ENCODE measurements at regions of chr12 and their contacts with region 1.

Region 1: GRCh38 chr12:62006076-62006732 is 254.0 kb upstream of the USP15 start:
- DNase-seq: peak in 6 of 9 donors; percentile 2 to 28 (median 10)
- ATAC-seq: peak; percentile 47
- H3K4me3 ChIP-seq: no peak overlapping the region
- H3K4me3 Mint-ChIP-seq: no peak overlapping the region
- H3K27ac ChIP-seq: no peak overlapping the region
- H3K27ac Mint-ChIP-seq: no peak overlapping the region
- H3K4me1 ChIP-seq: no peaks in the 10 kb centered on the region
- H3K4me1 Mint-ChIP-seq: no peaks in the 10 kb centered on the region
- H3K27me3 ChIP-seq: no peaks in the 10 kb centered on the region
- H3K27me3 Mint-ChIP-seq: peaks cover 0 to 5% (median 3%) of the 10 kb centered on the region in 5 donors

Region 2: DNA sequence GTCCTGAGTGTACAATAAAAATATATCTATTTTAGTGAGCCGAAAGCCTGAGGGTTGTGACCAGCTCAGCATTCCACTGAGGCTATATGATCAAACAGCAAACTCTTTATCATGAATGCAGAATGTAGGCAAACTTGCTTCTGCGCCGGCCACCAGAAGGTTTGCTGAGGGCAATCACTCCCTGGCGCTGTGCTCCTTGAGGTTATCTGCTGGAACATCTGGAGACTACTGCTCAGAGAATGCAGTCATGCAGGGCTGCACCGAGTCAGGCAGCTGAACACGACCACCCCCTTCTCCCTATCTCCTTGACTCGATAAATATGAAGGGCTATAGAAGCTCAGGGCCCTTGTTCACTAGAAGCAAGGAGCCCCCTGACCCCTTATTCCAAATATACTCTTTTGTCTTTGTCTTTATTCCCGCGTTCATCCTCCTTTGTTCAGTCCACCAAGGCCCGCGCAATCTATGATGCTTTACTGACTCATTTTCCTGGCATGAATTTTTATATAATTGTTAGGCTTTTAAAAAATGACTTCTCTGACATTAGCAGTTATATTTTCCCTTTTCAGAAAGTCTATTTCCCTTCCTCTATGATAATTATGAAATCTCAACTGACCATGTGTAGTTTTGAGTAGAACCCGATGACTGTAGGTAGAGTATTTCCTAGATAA is 1321.1 kb before region 1 on chr12:
- CTCF ChIA-PET with region 1: no interaction called
- POLR2A ChIA-PET with region 1: no interaction called
- intact Hi-C with region 1: loop called in 1 of 2 experiments (anchors 5 kb)
- DNase-seq: no peak
- ATAC-seq: no peak
- H3K4me3 ChIP-seq: no peak overlapping the region
- H3K4me3 Mint-ChIP-seq: no peak overlapping the region
- H3K27ac ChIP-seq: no peak overlapping the region
- H3K27ac Mint-ChIP-seq: no peak overlapping the region
- H3K4me1 ChIP-seq: no peaks in the 10 kb centered on the region
- H3K4me1 Mint-ChIP-seq: no peaks in the 10 kb centered on the region
- H3K27me3 ChIP-seq: no peaks in the 10 kb centered on the region
- H3K27me3 Mint-ChIP-seq: peaks cover 0 to 1% (median 0%) of the 10 kb centered on the region in 5 donors

Region 3: GRCh38 chr12:61654698-61655097 is 351.5 kb before region 1 on chr12:
- CTCF ChIA-PET with region 1: no interaction called
- POLR2A ChIA-PET with region 1: no interaction called
- intact Hi-C with region 1: loop called in 1 of 2 experiments (anchors 1 kb)
- DNase-seq: no peak
- ATAC-seq: no peak
- H3K4me3 ChIP-seq: no peak overlapping the region
- H3K4me3 Mint-ChIP-seq: no peak overlapping the region
- H3K27ac ChIP-seq: no peak overlapping the region
- H3K27ac Mint-ChIP-seq: no peak overlapping the region
- H3K4me1 ChIP-seq: no peaks in the 10 kb centered on the region
- H3K4me1 Mint-ChIP-seq: no peaks in the 10 kb centered on the region
- H3K27me3 ChIP-seq: peaks cover 0 to 3% of the 10 kb centered on the region in 2 donors
- H3K27me3 Mint-ChIP-seq: no peaks in the 10 kb centered on the region

Region 4: DNA sequence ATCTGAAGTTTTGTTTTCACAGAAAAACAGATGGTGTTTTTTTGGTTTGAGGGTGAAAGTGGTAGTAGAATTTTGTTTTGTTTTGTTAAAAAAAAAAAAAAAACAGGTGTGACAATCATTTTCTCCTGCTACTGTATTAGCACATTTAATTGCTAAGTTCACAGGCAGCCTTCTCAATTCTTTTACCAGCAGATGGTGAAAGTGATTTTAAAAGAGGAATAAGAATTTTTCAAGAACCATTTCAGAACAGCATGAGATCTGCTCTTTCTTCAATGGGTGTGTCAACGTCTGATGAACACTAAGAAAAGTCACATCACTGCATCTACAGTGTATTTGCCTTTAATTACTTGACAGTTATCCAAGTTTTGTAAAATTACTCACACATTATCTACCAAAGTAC is 49.7 kb before region 1 on chr12:
- CTCF ChIA-PET with region 1: no interaction called
- POLR2A ChIA-PET with region 1: no interaction called
- intact Hi-C with region 1: no loop called
- DNase-seq: no peak
- ATAC-seq: no peak
- H3K4me3 ChIP-seq: no peak overlapping the region
- H3K4me3 Mint-ChIP-seq: no peak overlapping the region
- H3K27ac ChIP-seq: no peak overlapping the region
- H3K27ac Mint-ChIP-seq: no peak overlapping the region
- H3K4me1 ChIP-seq: no peaks in the 10 kb centered on the region
- H3K4me1 Mint-ChIP-seq: no peaks in the 10 kb centered on the region
- H3K27me3 ChIP-seq: no peaks in the 10 kb centered on the region
- H3K27me3 Mint-ChIP-seq: no peaks in the 10 kb centered on the region

Region 5: DNA sequence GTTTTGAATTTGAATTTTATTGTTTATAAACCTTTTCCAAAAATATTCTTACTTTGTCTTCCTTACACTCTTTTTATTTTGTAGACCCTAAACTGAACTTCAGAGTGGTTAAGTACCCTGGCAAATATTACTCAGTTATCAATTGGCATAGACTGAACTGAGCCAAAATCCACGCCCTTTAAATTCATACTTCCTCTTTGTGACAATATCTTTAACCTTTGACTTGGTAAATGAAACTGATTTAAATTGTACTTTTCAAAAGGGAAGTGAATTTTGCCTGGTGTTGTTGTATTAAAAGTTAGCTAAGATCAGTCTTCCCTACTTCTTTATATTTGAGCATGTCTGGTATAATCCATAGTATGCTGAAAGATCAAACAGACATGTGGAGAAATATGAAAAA is 69.7 kb after region 1 on chr12:
- CTCF ChIA-PET with region 1: no interaction called
- POLR2A ChIA-PET with region 1: no interaction called
- intact Hi-C with region 1: no loop called
- DNase-seq: no peak
- ATAC-seq: no peak
- H3K4me3 ChIP-seq: no peak overlapping the region
- H3K4me3 Mint-ChIP-seq: no peak overlapping the region
- H3K27ac ChIP-seq: no peak overlapping the region
- H3K27ac Mint-ChIP-seq: no peak overlapping the region
- H3K4me1 ChIP-seq: no peaks in the 10 kb centered on the region
- H3K4me1 Mint-ChIP-seq: no peaks in the 10 kb centered on the region
- H3K27me3 ChIP-seq: no peaks in the 10 kb centered on the region
- H3K27me3 Mint-ChIP-seq: peaks cover 3 to 16% (median 3%) of the 10 kb centered on the region in 5 donors

Region 6: GRCh38 chr12:62106547-62107185 is 100.5 kb after region 1 on chr12:
- CTCF ChIA-PET with region 1: no interaction called
- POLR2A ChIA-PET with region 1: no interaction called
- intact Hi-C with region 1: no loop called
- DNase-seq: no peak
- ATAC-seq: no peak
- H3K4me3 ChIP-seq: no peak overlapping the region
- H3K4me3 Mint-ChIP-seq: no peak overlapping the region
- H3K27ac ChIP-seq: no peak overlapping the region
- H3K27ac Mint-ChIP-seq: no peak overlapping the region
- H3K4me1 ChIP-seq: no peaks in the 10 kb centered on the region
- H3K4me1 Mint-ChIP-seq: no peaks in the 10 kb centered on the region
- H3K27me3 ChIP-seq: no peaks in the 10 kb centered on the region
- H3K27me3 Mint-ChIP-seq: peaks cover 4 to 9% (median 5%) of the 10 kb centered on the region in 5 donors

Region 7: DNA sequence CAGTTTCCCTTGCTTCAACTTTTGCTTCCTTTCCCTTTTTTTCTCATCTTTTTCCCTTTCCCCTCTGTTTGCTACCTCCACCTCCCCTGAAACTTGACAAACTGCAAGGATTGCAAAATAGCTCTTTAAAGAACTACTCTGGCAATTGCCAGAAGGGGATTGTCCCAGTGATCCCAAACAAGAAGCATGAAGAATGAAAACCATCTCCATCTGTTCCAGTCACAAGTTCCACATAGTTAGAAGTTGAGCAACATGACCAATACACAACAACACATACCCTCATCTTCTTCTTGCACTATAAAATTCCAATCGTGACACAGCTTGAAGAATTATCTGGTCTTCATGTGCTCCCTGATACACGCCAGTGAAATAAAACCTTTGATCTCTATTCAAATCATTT is 160.3 kb after region 1 on chr12:
- CTCF ChIA-PET with region 1: no interaction called
- POLR2A ChIA-PET with region 1: no interaction called
- intact Hi-C with region 1: no loop called
- DNase-seq: no peak
- ATAC-seq: no peak
- H3K4me3 ChIP-seq: no peak overlapping the region
- H3K4me3 Mint-ChIP-seq: no peak overlapping the region
- H3K27ac ChIP-seq: no peak overlapping the region
- H3K27ac Mint-ChIP-seq: no peak overlapping the region
- H3K4me1 ChIP-seq: peaks cover 0 to 10% of the 10 kb centered on the region in 2 donors
- H3K4me1 Mint-ChIP-seq: peaks cover 0 to 20% (median 15%) of the 10 kb centered on the region in 7 donors
- H3K27me3 ChIP-seq: no peaks in the 10 kb centered on the region
- H3K27me3 Mint-ChIP-seq: peaks cover 0 to 11% (median 2%) of the 10 kb centered on the region in 5 donors

Measured in naive thymus-derived CD4-positive, alpha-beta T cell (primary cell).